ENCODE measurements at regions of chr5 and their contacts with region 1.

Region 1: DNA sequence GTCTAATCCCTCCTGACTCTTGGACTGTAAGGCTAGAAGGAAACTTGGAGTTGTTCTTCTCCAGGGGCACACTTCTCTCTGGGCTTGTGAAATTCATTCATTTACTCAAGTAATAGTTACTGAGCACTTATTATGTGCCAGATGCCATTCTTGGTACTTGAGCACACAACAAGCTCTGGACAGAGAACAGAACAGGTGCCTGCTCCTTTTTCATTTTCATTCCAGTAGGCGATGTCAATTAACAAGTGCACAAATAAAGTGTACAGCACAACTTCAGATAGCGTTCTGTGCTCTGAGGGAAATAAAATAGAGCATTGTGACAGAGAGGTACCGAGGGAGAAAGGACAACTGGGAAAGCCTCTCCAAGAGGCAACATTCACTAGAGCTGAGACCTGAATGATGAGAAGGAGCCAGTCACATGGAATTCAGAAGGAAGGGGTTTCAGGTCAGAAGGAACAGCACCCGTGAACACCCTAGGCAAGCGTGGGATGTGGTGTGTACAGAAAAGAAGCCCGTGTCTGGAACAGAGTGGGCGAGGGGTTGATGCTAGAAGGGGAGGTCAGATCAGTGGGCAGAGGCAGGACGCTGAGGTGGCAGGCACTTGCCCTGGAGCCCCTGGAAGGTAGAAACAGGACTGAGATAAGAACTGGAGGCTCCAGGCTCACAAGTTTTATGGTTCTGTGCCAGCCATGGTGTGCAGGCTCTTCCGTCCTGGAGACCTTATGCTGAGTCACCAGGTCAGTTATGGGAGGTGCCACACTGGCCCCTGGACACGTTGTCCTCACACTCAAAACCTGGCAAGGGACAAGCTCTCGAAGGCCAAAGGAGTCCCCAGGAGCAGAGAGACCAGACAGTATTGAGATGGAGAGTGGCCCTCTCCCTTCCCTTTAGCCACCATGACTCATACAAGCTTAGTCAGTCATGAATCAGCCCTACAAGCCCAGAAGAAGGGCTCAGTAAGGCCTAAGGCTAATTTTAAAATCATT is 7.2 kb upstream of the ABLIM3 start:
- DNase-seq: peak in 3 of 5 donors; percentile 60 to 92 (median 82)
- ATAC-seq: peak; percentile 83 to 94 (median 90)
- H3K4me3 ChIP-seq: no peak overlapping the region
- H3K27ac ChIP-seq: peak overlapping the region in 11 of 12 donors; percentile 18 to 95 (median 49)
- H3K4me1 ChIP-seq: peaks cover 0 to 60% (median 26%) of the 10 kb centered on the region in 12 donors
- H3K27me3 ChIP-seq: no peaks in the 10 kb centered on the region
- CTCF ChIP-seq: no peak
- POLR2A ChIP-seq: no peak

Region 2: DNA sequence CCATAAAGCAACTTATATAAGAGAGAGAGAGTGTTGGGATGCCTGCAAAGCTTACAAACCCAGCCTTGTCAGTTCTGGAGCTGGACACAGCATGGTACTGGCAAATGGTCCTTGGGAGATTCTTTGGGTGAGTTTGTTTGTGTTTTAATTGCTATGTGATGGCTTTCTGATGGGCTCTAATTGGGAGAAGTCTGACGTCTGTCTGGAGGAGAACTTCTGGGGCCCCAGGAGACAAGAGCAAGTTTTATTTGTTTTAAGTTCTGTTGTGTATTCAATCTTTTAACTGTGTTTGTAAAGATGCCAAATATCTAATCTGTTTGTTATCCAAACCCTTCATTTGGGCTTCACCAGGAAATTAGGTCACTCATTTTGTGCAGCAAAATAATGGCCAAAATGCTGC is 87.2 kb after region 1 on chr5:
- intact Hi-C with region 1: loop called in 3 of 10 experiments (anchors 1 to 5 kb)
- DNase-seq: no peak
- ATAC-seq: no peak
- H3K4me3 ChIP-seq: no peak overlapping the region
- H3K27ac ChIP-seq: peak overlapping the region; percentile 3 to 73 (median 48)
- H3K4me1 ChIP-seq: peaks cover 3 to 76% (median 50%) of the 10 kb centered on the region in 12 donors
- H3K27me3 ChIP-seq: no peaks in the 10 kb centered on the region
- CTCF ChIP-seq: no peak
- POLR2A ChIP-seq: no peak

Region 3: DNA sequence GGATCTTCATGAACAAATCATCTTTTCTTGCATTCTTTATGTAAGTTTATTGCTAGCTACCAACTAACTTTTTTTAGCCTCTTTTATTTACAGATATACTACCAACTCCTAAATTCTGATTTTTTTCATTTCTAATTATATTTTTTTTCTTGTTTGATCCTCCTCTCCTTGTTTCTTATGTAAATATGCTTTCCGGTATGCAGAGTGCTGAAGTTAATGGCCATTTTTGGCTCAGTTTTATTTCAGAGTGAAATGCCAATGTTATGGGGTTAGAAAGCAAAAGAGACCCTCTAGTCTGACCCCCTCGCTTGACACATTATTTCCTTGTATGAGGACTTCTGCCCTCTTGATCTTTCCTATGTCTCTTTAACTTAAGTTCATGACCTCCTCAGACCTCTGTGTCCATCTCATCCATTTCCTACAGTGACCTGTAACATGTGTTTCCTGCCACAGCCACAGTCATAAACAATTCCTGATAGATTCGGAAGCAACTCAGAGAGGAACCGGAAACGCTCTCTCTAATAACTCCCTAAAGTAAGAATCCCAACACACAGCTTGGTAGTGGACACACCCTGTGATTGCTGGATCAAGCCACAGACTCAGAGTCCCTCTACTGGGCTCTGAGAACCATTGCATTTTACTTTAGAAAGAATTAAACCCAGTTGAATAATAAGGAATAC is 94.7 kb after region 1 on chr5:
- intact Hi-C with region 1: loop called in 4 of 10 experiments (anchors 1 to 5 kb)
- DNase-seq: peak in 4 of 5 donors; percentile 54 to 72 (median 66)
- ATAC-seq: peak; percentile 87 to 94 (median 92)
- H3K4me3 ChIP-seq: no peak overlapping the region
- H3K27ac ChIP-seq: peak overlapping the region; percentile 11 to 78 (median 64)
- H3K4me1 ChIP-seq: peaks cover 0 to 40% (median 21%) of the 10 kb centered on the region in 12 donors
- H3K27me3 ChIP-seq: no peaks in the 10 kb centered on the region
- CTCF ChIP-seq: peak; percentile 52 to 89 (median 84)
- POLR2A ChIP-seq: no peak

Region 4: GRCh38 chr5:149345147-149345875 is 211.2 kb after region 1 on chr5 and contains the start of gene GRPEL2:
- intact Hi-C with region 1: loop called in 2 of 10 experiments (anchors 10 kb)
- DNase-seq: peak; percentile 95 to 98 (median 98)
- ATAC-seq: peak; percentile 95 to 98 (median 98)
- H3K4me3 ChIP-seq: peak within 1 kb of the TSS; percentile 49 to 86 (median 74)
- H3K27ac ChIP-seq: peak within 1 kb of the TSS; percentile 69 to 93 (median 86)
- H3K4me1 ChIP-seq: peaks cover 0 to 52% (median 16%) of the 10 kb centered on the region in 12 donors
- H3K27me3 ChIP-seq: no peaks in the 10 kb centered on the region
- CTCF ChIP-seq: no peak
- POLR2A ChIP-seq: peak in 1 of 2 donors; percentile 68
- total RNA-seq, gene GRPEL2: 6.7 to 14.0 (median 10.2) TPM

Region 5: GRCh38 chr5:149367249-149367971 is 233.3 kb after region 1 on chr5:
- intact Hi-C with region 1: loop called in 2 of 10 experiments (anchors 5 to 10 kb)
- DNase-seq: peak in 4 of 5 donors; percentile 58 to 69 (median 64)
- ATAC-seq: peak in 3 of 4 donors; percentile 57 to 62 (median 60)
- H3K4me3 ChIP-seq: no peak overlapping the region
- H3K27ac ChIP-seq: peak overlapping the region in 1 of 12 donors; percentile 60
- H3K4me1 ChIP-seq: peaks cover 0 to 26% (median 10%) of the 10 kb centered on the region in 12 donors
- H3K27me3 ChIP-seq: no peaks in the 10 kb centered on the region
- CTCF ChIP-seq: peak; percentile 62 to 84 (median 81)
- POLR2A ChIP-seq: no peak

Measured in heart left ventricle (tissue), 16 donors.